ENCODE measurements at regions of chr5 and their contacts with region 1.

Region 1: DNA sequence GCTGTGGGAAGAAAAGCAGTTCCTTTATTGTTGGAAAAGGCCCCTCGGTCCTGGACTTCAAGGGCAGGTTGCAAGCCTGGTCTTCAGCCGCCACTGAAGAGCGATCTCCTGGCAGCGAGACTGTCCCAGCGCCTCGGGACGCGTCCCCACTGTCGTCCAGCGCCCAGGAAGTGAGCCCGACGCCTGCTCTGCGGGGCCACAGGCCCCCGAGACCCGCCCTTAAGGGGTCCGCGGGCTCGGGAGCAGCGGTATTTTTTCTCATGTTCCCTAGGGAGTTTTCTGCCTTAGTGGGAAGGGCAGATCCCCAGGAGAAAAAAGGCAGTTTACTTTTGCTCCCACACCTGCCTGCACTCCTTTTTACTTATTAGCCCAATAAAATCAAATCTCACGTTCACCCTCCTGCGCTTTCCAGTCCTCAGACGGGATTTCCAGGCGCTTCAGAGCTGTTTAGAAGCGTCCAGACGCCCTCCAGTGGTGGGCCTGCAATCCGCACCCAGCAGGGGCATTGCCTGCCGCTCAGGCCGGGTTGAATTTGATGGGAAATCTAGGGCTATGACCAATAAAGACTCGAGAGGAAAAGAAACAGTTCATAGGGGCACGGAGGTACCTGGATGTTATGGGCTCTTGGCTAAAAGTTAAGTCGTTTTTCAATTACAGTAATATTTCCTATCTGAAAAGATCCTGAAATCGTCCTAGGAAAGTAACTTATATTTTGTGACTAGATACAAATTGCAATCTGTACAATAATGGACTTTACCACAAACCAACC is 2.8 kb upstream of the EFNA5 start:
- DNase-seq: peak; percentile 88
- ATAC-seq: peak; percentile 54

Region 2: DNA sequence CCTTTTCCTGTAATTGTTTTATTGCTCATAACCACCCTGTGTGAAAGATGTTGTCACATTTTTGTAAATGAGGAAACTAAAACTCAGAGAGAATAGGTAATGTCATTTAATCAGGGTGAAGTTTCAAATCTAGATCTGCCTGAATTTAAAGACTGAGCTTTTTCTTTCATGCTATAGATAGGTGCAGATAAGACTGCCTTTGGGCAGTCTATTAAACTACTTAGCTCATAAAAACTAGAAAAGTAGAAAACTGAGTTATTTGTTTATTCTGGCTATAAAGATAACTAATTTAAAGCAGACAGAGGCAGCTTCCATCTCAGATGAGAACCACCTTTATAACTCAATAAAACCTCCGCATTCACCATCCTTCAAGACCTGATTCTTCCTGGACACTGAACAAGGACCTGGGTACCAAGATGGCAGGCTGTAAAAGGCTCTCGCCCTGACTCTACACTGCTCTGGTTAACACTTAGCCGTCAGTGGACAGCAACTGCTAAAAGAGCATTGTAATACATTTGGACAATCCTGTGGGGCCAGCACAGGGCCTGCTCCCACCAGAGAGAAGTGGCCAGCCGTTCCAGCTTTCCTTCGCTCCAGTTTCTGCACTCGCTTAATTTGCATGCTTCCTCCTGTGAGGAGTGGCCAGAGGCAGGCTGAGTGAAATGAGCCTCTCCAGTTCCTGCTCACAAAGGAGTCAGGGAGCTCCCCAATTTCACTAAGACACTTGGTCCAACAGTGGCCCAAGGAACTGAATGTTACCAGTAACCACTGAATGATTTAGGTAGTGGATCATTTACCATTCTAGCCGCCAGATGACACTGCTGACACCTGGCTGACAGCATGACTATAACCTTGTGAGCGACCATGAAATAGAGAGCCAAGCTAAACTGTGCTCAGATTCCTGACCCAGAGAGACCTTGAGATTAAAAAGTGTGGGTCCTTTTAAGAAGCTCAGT is 569.2 kb before region 1 on chr5:
- intact Hi-C with region 1: loop called (anchors 5 kb)
- DNase-seq: peak; percentile 30
- ATAC-seq: peak; percentile 97

Measured in left ventricle myocardium superior (tissue), 1 donor.